PC-3 (cell line): ENCODE measurements at regions of chr9 and their contacts with region 1.

Region 1: GRCh38 chr9:592225-592624 is 249.3 kb upstream of the DMRT1 start:
- DNase-seq: peak; percentile 83
- ATAC-seq: peak; percentile 84
- H3K4me3 ChIP-seq: no peak overlapping the region; the same call in 1 of the 2 replicates
- H3K27ac ChIP-seq: peak overlapping the region; percentile 93
- H3K4me1 ChIP-seq: peaks cover 21% of the 10 kb centered on the region
- H3K27me3 ChIP-seq: no peaks in the 10 kb centered on the region
- CTCF ChIP-seq: no peak

Region 2: GRCh38 chr9:503881-504852 is 88.1 kb before region 1 on chr9:
- CTCF ChIA-PET with region 1: no interaction called
- POLR2A ChIA-PET with region 1: no interaction called
- intact Hi-C with region 1: loop called (anchors 2 kb)
- DNase-seq: peak; percentile 76
- ATAC-seq: peak; percentile 86
- H3K4me3 ChIP-seq: peak within 1 kb of the TSS; percentile 89
- H3K27ac ChIP-seq: peak within 1 kb of the TSS; percentile 29; the same call in 1 of the 2 replicates
- H3K4me1 ChIP-seq: peaks cover 21% of the 10 kb centered on the region
- H3K27me3 ChIP-seq: no peaks in the 10 kb centered on the region
- CTCF ChIP-seq: peak; percentile 32; the same call in 1 of the 2 replicates